ENCODE measurements at regions of chr12 and their contacts with region 1.

Region 1: DNA sequence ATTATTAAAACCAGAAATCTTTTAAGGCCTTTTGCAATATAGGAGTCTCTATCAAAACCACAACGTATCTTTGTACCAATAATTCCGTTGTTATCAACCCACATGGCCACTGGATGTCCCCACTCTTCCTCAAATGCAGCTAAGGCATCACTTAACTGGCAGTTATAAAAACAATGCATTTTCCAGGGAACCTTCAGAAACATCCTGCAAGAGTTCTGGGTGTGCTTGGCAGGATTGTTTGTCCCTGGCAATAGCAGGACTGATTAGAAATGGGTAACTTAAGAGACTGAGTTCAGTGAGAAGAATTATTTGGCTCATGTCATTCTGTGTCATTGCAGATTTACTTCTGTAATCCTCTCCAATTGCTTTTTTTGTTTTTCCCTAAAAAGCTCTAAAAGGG is 112.0 kb downstream of the SLC15A5 start:
- DNase-seq: peak; percentile 16 to 58
- ATAC-seq: peak; percentile 73 to 83; a peak in 4 of 6 replicates
- H3K4me3 ChIP-seq: no peak overlapping the region
- H3K27ac ChIP-seq: no peak overlapping the region
- H3K4me1 ChIP-seq: no peaks in the 10 kb centered on the region
- CTCF ChIP-seq: peak; percentile 73
- EP300 ChIP-seq: no peak
- POLR2A ChIP-seq: no peak
- RAD21 ChIP-seq: peak; percentile 85 to 87

Region 2: GRCh38 chr12:16359512-16360491 is 194.3 kb after region 1 on chr12:
- CTCF ChIA-PET with region 1: interaction called, 11 read pairs
- POLR2A ChIA-PET with region 1: no interaction called
- DNase-seq: peak; percentile 41 to 72
- ATAC-seq: peak; percentile 86 to 91
- H3K4me3 ChIP-seq: no peak overlapping the region
- H3K27ac ChIP-seq: peak overlapping the region in 1 of 2 experiments; percentile 22; a peak in 1 of 6 replicates
- H3K4me1 ChIP-seq: peaks cover 35% of the 10 kb centered on the region
- CTCF ChIP-seq: peak; percentile 85
- EP300 ChIP-seq: no peak
- POLR2A ChIP-seq: no peak
- RAD21 ChIP-seq: peak; percentile 74 to 79